Natural killer cell (primary cell): ENCODE measurements at regions of chr6 and their contacts with region 1.

Region 1: GRCh38 chr6:31769684-31770371 is 7.3 kb downstream of the VWA7 start:
- DNase-seq: peak; percentile 80 to 88
- ATAC-seq: peak; percentile 95 to 97 (median 95)
- H3K4me3 ChIP-seq: no peak overlapping the region
- H3K4me3 Mint-ChIP-seq: no peak overlapping the region
- H3K27ac ChIP-seq: no peak overlapping the region
- H3K27ac Mint-ChIP-seq: peak overlapping the region; percentile 53 to 60
- H3K4me1 ChIP-seq: peaks cover 33% of the 10 kb centered on the region
- H3K4me1 Mint-ChIP-seq: peaks cover 6 to 28% of the 10 kb centered on the region in 2 donors
- H3K27me3 ChIP-seq: no peaks in the 10 kb centered on the region
- H3K27me3 Mint-ChIP-seq: no peaks in the 10 kb centered on the region
- CTCF ChIP-seq: peak; percentile 72

Region 2: GRCh38 chr6:31729515-31729978 is 40.3 kb before region 1 on chr6:
- intact Hi-C with region 1: loop called (anchors 1 kb)
- DNase-seq: peak; percentile 81 to 90
- ATAC-seq: peak; percentile 69 to 83 (median 74)
- H3K4me3 ChIP-seq: peak overlapping the region; percentile 75
- H3K4me3 Mint-ChIP-seq: peak overlapping the region; percentile 97
- H3K27ac ChIP-seq: peak overlapping the region; percentile 64
- H3K27ac Mint-ChIP-seq: peak overlapping the region; percentile 90 to 91
- H3K4me1 ChIP-seq: peaks cover 65% of the 10 kb centered on the region
- H3K4me1 Mint-ChIP-seq: peaks cover 52 to 72% of the 10 kb centered on the region in 2 donors
- H3K27me3 ChIP-seq: no peaks in the 10 kb centered on the region
- H3K27me3 Mint-ChIP-seq: no peaks in the 10 kb centered on the region
- CTCF ChIP-seq: peak; percentile 93